ENCODE measurements at regions of chr1 and their contacts with region 1.

Region 1: GRCh38 chr1:51192213-51192843 is 43.7 kb upstream of the RNF11 start:
- DNase-seq: peak; percentile 65 to 86 (median 70)
- ATAC-seq: peak; percentile 90
- H3K4me3 ChIP-seq: no peak overlapping the region
- H3K27ac ChIP-seq: no peak overlapping the region
- H3K4me1 ChIP-seq: peaks cover 0 to 3% of the 10 kb centered on the region in 2 experiments; a peak in 1 of 5 replicates
- H3K27me3 ChIP-seq: no peaks in the 10 kb centered on the region
- CTCF ChIP-seq: peak; percentile 79 to 91 (median 81)
- EP300 ChIP-seq: no peak
- POLR2A ChIP-seq: no peak
- RAD21 ChIP-seq: peak; percentile 72 to 82

Region 2: GRCh38 chr1:50929376-50929958 is 262.9 kb before region 1 on chr1:
- CTCF ChIA-PET with region 1: interaction called, 3 read pairs
- POLR2A ChIA-PET with region 1: no interaction called
- in situ Hi-C with region 1: loop called (anchors 10 kb)
- intact Hi-C with region 1: loop called (anchors 1 kb)
- DNase-seq: peak in 2 of 4 experiments; percentile 21 to 41
- ATAC-seq: peak; percentile 67
- H3K4me3 ChIP-seq: no peak overlapping the region
- H3K27ac ChIP-seq: no peak overlapping the region
- H3K4me1 ChIP-seq: peaks cover 0 to 3% of the 10 kb centered on the region in 2 experiments; a peak in 1 of 5 replicates
- H3K27me3 ChIP-seq: no peaks in the 10 kb centered on the region
- CTCF ChIP-seq: peak; percentile 23 to 74 (median 41); a peak in 3 of 6 replicates
- EP300 ChIP-seq: no peak
- POLR2A ChIP-seq: no peak
- RAD21 ChIP-seq: peak; percentile 53 to 80

Region 3: DNA sequence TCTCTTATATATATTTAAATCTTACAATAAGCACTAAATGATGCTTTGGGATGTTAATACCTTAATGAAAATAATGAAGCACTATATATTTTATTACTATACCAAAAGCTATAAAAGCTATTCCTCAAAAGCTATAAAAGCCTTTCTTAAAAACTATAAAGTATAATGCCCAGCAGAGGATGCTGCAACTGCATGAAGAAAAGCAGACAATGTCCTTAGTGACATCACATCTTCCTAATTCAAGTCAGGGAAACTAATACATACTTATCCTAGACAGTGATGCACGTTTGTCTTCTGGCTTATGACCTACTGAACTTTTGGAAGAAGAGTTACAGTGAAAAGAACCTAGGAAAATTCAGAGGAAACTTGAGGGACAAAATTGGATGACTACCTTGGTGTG is 103.8 kb before region 1 on chr1:
- CTCF ChIA-PET with region 1: no interaction called
- POLR2A ChIA-PET with region 1: no interaction called
- in situ Hi-C with region 1: no loop called
- intact Hi-C with region 1: loop called (anchors 1 kb)
- DNase-seq: peak in 2 of 4 experiments; percentile 18 to 19
- ATAC-seq: no peak
- H3K4me3 ChIP-seq: no peak overlapping the region
- H3K27ac ChIP-seq: no peak overlapping the region
- H3K4me1 ChIP-seq: no peaks in the 10 kb centered on the region
- H3K27me3 ChIP-seq: peaks cover 5 to 27% of the 10 kb centered on the region in 2 experiments
- CTCF ChIP-seq: peak; percentile 14 to 43 (median 25); a peak in 3 of 6 replicates
- EP300 ChIP-seq: no peak
- POLR2A ChIP-seq: no peak
- RAD21 ChIP-seq: peak in 1 of 2 experiments; percentile 57; a peak in 1 of 4 replicates

Region 4: DNA sequence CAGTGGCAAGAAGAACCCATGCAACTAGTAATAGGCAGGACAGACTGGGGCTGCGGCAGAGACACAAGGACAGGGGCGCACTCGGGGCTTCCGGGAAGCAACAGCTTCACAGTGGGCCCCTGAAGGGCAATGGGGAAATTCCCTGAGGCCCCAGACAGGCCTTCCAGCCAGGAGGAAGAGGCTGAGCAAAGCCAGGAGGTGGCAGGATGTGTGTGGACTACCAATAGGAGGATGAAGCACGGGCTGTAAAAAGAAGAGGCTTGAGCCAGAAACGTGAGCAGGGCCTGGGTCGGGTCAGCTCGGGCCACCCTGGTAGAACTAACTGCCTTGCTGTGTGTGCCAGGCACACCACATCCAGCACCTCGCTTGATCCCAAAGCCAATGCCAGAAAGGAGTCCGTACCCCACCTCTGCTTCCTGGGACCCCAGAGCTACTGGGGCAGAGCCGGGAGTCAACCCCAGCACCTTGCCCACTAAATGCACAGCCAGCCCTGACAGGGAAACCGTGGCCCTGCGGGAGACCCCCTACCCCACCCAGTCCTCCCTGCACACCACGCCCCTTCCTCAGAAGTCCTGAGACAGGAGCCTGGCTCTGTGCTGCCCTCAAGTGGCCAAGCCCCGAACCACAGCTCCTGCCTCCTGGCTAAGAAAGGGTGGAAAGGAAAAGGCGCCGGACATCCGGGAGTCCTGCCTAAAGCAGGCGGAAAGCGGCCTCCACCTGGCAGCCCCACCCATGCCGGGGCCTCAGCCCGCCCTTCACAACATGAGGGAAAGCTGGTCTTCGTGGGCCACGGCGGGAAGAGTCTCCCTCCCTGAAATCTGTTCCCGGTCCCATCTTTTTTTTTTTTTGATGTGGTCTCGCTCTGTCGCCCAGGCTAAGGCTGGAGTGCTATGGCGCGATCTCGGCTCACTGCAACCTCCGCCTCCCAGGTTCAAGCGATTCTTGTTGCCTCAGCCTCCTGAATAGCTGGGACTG is 104.3 kb after region 1 on chr1:
- CTCF ChIA-PET with region 1: no interaction called
- POLR2A ChIA-PET with region 1: no interaction called
- in situ Hi-C with region 1: no loop called
- intact Hi-C with region 1: loop called (anchors 2 kb)
- DNase-seq: peak; percentile 90 to 94 (median 91)
- ATAC-seq: peak; percentile 92
- H3K4me3 ChIP-seq: no peak overlapping the region
- H3K27ac ChIP-seq: no peak overlapping the region; the same call in 2 of the 3 replicates
- H3K4me1 ChIP-seq: peaks cover 12 to 44% of the 10 kb centered on the region in 2 experiments; a peak in 4 of 5 replicates
- H3K27me3 ChIP-seq: no peaks in the 10 kb centered on the region
- CTCF ChIP-seq: peak; percentile 94 to 99 (median 96)
- EP300 ChIP-seq: no peak
- POLR2A ChIP-seq: no peak
- RAD21 ChIP-seq: peak; percentile 90 to 94

Measured in K562 (cell line).